Gastrocnemius medialis (tissue), 4 donors: ENCODE measurements at regions of chr2 and their contacts with region 1.

Region 1: GRCh38 chr2:235703791-235704190 is 209.9 kb downstream of the AGAP1 start:
- DNase-seq: no peak
- ATAC-seq: no peak
- H3K4me3 ChIP-seq: no peak overlapping the region
- H3K27ac ChIP-seq: peak overlapping the region in 3 of 4 donors; percentile 57 to 72 (median 62)
- H3K4me1 ChIP-seq: peaks cover 6 to 9% of the 10 kb centered on the region in 2 donors
- H3K27me3 ChIP-seq: no peaks in the 10 kb centered on the region
- CTCF ChIP-seq: no peak
- POLR2A ChIP-seq: no peak

Region 2: GRCh38 chr2:235605312-235606003 is 98.3 kb before region 1 on chr2:
- in situ Hi-C with region 1: no loop called
- intact Hi-C with region 1: no loop called
- DNase-seq: peak; percentile 61 to 78
- ATAC-seq: peak; percentile 84
- H3K4me3 ChIP-seq: no peak overlapping the region
- H3K27ac ChIP-seq: no peak overlapping the region
- H3K4me1 ChIP-seq: peaks cover 0 to 16% of the 10 kb centered on the region in 2 donors
- H3K27me3 ChIP-seq: peaks cover 0 to 4% (median 0%) of the 10 kb centered on the region in 3 donors
- CTCF ChIP-seq: no peak
- POLR2A ChIP-seq: no peak

Region 3: GRCh38 chr2:235669269-235669831 is 34.4 kb before region 1 on chr2:
- in situ Hi-C with region 1: no loop called
- intact Hi-C with region 1: loop called (anchors 2 kb)
- DNase-seq: peak; percentile 33 to 58
- ATAC-seq: peak; percentile 64 to 66
- H3K4me3 ChIP-seq: peak overlapping the region; percentile 38 to 49 (median 46)
- H3K27ac ChIP-seq: no peak overlapping the region
- H3K4me1 ChIP-seq: peaks cover 14 to 22% of the 10 kb centered on the region in 2 donors
- H3K27me3 ChIP-seq: no peaks in the 10 kb centered on the region
- CTCF ChIP-seq: peak in 1 of 5 experiments; percentile 26
- POLR2A ChIP-seq: no peak